Naive thymus-derived CD4-positive, alpha-beta T cell (primary cell): ENCODE measurements at regions of chr9 and their contacts with region 1.

Region 1: DNA sequence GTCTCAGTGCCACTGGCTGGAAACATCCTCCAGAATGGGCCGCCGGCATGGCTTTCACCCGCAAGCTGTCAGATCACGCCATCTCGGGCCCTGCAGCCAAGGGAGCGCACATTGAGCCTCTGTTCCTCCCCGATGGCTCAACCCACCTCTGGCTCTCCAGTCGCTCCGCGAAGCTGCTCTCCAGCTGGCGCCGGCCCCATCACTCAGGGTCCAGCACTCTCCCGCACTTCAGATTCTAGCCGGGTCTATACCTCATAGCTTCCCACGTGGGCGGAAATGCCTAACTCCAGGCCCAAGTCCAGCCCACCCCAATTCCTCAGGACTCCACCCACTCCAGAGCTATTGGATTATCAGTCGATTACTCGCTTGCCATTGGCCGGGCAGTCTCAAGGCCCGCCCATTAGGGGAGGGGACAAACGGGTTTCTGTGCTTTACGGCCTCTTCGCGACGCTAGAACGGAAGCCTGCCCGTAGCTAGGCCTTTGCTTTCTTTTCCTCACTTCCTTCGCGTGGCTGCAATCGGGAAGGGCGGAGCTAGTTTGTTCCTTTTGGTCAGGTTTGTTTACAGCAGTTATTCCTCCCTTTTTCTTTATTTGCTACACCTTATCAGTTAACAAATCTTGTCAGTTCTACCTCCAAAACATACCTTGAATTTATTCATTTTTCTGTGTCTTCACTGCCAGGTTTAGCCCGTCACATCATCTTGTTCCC is at the start of gene NOL6:
- DNase-seq: peak; percentile 91 to 99 (median 98)
- ATAC-seq: peak; percentile 100
- H3K4me3 ChIP-seq: peak within 1 kb of the TSS; percentile 88
- H3K4me3 Mint-ChIP-seq: peak within 1 kb of the TSS; percentile 88 to 100 (median 97)
- H3K27ac ChIP-seq: peak within 1 kb of the TSS; percentile 78
- H3K27ac Mint-ChIP-seq: peak within 1 kb of the TSS; percentile 88 to 99 (median 96)
- H3K4me1 ChIP-seq: peaks cover 13 to 19% of the 10 kb centered on the region in 2 donors
- H3K4me1 Mint-ChIP-seq: peaks cover 9 to 38% (median 31%) of the 10 kb centered on the region in 7 donors
- H3K27me3 ChIP-seq: no peaks in the 10 kb centered on the region
- H3K27me3 Mint-ChIP-seq: no peaks in the 10 kb centered on the region
- total RNA-seq, gene NOL6: 34.0 to 48.0 (median 44.0) TPM

Region 2: GRCh38 chr9:32117276-32117675 is 1356.5 kb before region 1 on chr9:
- CTCF ChIA-PET with region 1: no interaction called
- POLR2A ChIA-PET with region 1: no interaction called
- intact Hi-C with region 1: no loop called
- DNase-seq: no peak
- ATAC-seq: no peak
- H3K4me3 ChIP-seq: no peak overlapping the region
- H3K4me3 Mint-ChIP-seq: no peak overlapping the region
- H3K27ac ChIP-seq: no peak overlapping the region
- H3K27ac Mint-ChIP-seq: no peak overlapping the region
- H3K4me1 ChIP-seq: no peaks in the 10 kb centered on the region
- H3K4me1 Mint-ChIP-seq: no peaks in the 10 kb centered on the region
- H3K27me3 ChIP-seq: no peaks in the 10 kb centered on the region
- H3K27me3 Mint-ChIP-seq: peaks cover 0 to 6% (median 0%) of the 10 kb centered on the region in 5 donors

Region 3: DNA sequence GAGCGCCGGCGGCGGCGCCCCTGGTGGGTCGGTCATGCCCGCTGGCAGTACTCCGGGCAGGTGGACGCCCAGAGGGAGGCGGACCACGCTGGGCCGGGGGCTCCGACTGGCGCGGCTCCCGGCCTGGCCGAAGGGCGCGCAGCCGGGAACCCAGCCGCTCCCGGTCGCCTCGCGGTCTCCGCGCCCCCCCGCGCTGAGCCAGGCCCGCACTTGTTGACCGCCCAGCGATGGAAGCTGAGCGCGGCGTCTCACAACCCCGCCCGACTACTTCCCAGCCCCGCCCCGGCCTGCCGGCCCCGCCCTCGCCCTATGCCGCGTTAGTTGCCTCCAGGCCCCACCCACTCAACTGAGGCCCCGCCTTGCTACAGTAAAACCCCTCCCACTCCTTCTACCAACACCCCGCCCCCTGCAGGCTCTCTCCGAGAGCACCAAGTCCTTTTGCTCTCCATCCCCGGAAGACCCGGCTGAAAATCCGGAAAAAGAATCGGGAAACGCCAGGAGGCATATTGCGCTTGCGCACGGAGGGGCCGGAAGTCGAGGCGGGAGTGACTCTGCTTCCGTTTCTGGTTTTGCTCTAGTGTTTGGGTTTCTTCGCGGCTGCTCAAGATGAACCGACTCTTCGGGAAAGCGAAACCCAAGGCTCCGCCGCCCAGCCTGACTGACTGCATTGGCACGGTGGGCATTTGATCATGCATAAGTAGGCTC is 209.2 kb before region 1 on chr9 and contains the starts of genes BAG1 and CHMP5:
- CTCF ChIA-PET with region 1: interaction called, 3 read pairs
- POLR2A ChIA-PET with region 1: no interaction called
- intact Hi-C with region 1: loop called (anchors 1 to 10 kb)
- DNase-seq: peak; percentile 98 to 100 (median 100)
- ATAC-seq: peak; percentile 99
- H3K4me3 ChIP-seq: peak within 1 kb of the TSS; percentile 95
- H3K4me3 Mint-ChIP-seq: peak within 1 kb of the TSS; percentile 82 to 98 (median 92)
- H3K27ac ChIP-seq: peak within 1 kb of the TSS; percentile 88
- H3K27ac Mint-ChIP-seq: peak within 1 kb of the TSS; percentile 84 to 99 (median 97)
- H3K4me1 ChIP-seq: peaks cover 15 to 34% of the 10 kb centered on the region in 2 donors
- H3K4me1 Mint-ChIP-seq: peaks cover 36 to 66% (median 55%) of the 10 kb centered on the region in 7 donors
- H3K27me3 ChIP-seq: no peaks in the 10 kb centered on the region
- H3K27me3 Mint-ChIP-seq: peaks cover 0 to 2% (median 0%) of the 10 kb centered on the region in 5 donors
- total RNA-seq, gene BAG1: 48.6 to 77.2 (median 61.0) TPM
- total RNA-seq, gene CHMP5: 21.4 to 74.6 (median 35.3) TPM

Region 4: DNA sequence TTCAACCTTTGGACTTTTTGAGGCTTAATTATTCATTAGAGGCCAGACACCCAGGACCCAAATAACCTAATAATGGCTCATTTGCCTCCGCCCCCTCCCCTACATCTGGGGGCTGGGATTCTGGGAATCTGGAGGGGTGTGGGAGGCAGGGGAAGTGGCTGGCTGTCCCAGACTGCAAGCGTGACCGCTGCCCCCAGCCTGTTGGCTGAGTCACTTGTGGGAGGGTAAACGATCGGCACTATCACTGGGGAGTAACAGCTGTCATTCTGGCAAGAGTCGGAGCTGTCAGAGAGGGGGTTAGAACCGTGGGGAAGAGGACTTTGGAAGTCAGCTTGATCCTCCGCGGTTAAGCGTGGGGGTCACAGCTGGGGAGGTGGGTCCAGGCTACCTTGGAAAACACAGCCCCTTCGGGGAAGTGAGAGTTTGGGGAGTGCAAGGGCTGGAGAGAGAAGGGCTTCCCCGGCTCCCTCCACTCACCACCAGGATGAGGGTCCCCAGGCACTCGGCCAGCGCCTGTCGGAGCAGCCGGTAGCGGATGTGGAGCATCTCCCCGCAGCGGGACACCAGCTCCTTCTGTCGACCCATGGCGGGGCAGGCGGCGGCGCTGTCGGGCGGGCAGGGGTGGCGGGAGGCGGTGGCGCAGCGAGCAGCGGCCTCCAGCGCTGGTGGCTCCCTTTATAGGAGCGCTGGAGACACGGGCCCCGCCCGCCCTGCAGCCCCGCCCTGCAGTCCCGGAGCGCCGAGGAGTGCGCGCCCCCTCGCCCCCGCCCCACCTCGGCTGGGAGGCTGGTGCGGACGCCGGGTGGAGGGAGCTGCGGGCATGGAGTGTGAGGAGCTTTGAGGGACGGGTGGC is 26.6 kb before region 1 on chr9 and contains the start of gene AQP3:
- CTCF ChIA-PET with region 1: interaction called, 17 read pairs
- POLR2A ChIA-PET with region 1: interaction called, 31 read pairs
- intact Hi-C with region 1: loop called (anchors 1 kb)
- DNase-seq: peak; percentile 59 to 77 (median 72)
- ATAC-seq: peak; percentile 79
- H3K4me3 ChIP-seq: peak within 1 kb of the TSS; percentile 86
- H3K4me3 Mint-ChIP-seq: peak within 1 kb of the TSS; percentile 89 to 98 (median 94)
- H3K27ac ChIP-seq: peak within 1 kb of the TSS; percentile 85
- H3K27ac Mint-ChIP-seq: peak within 1 kb of the TSS; percentile 81 to 97 (median 96)
- H3K4me1 ChIP-seq: peaks cover 27 to 36% of the 10 kb centered on the region in 2 donors
- H3K4me1 Mint-ChIP-seq: peaks cover 23 to 60% (median 45%) of the 10 kb centered on the region in 7 donors
- H3K27me3 ChIP-seq: no peaks in the 10 kb centered on the region
- H3K27me3 Mint-ChIP-seq: no peaks in the 10 kb centered on the region
- total RNA-seq, gene AQP3: 53.3 to 173 (median 110) TPM

Region 5: GRCh38 chr9:33452828-33453271 is 20.9 kb before region 1 on chr9:
- CTCF ChIA-PET with region 1: interaction called, 17 read pairs
- POLR2A ChIA-PET with region 1: interaction called, 31 read pairs
- intact Hi-C with region 1: no loop called
- DNase-seq: peak in 4 of 9 donors; percentile 25 to 51 (median 40)
- ATAC-seq: peak; percentile 63
- H3K4me3 ChIP-seq: no peak overlapping the region
- H3K4me3 Mint-ChIP-seq: peak overlapping the region in 5 of 10 donors; percentile 25 to 67 (median 36)
- H3K27ac ChIP-seq: peak overlapping the region; percentile 37
- H3K27ac Mint-ChIP-seq: peak overlapping the region in 8 of 9 donors; percentile 59 to 95 (median 82)
- H3K4me1 ChIP-seq: peaks cover 39 to 56% of the 10 kb centered on the region in 2 donors
- H3K4me1 Mint-ChIP-seq: peaks cover 40 to 64% (median 56%) of the 10 kb centered on the region in 7 donors
- H3K27me3 ChIP-seq: no peaks in the 10 kb centered on the region
- H3K27me3 Mint-ChIP-seq: no peaks in the 10 kb centered on the region

Region 6: GRCh38 chr9:33458444-33458843 is 15.4 kb before region 1 on chr9:
- CTCF ChIA-PET with region 1: interaction called, 7 read pairs
- POLR2A ChIA-PET with region 1: interaction called, 13 read pairs
- intact Hi-C with region 1: no loop called
- DNase-seq: peak in 5 of 9 donors; percentile 22 to 68 (median 35)
- ATAC-seq: peak; percentile 65
- H3K4me3 ChIP-seq: no peak overlapping the region
- H3K4me3 Mint-ChIP-seq: peak overlapping the region; percentile 1 to 78 (median 60)
- H3K27ac ChIP-seq: peak overlapping the region; percentile 60
- H3K27ac Mint-ChIP-seq: peak overlapping the region; percentile 80 to 95 (median 89)
- H3K4me1 ChIP-seq: peaks cover 34 to 49% of the 10 kb centered on the region in 2 donors
- H3K4me1 Mint-ChIP-seq: peaks cover 34 to 53% (median 47%) of the 10 kb centered on the region in 7 donors
- H3K27me3 ChIP-seq: no peaks in the 10 kb centered on the region
- H3K27me3 Mint-ChIP-seq: no peaks in the 10 kb centered on the region

Region 7: DNA sequence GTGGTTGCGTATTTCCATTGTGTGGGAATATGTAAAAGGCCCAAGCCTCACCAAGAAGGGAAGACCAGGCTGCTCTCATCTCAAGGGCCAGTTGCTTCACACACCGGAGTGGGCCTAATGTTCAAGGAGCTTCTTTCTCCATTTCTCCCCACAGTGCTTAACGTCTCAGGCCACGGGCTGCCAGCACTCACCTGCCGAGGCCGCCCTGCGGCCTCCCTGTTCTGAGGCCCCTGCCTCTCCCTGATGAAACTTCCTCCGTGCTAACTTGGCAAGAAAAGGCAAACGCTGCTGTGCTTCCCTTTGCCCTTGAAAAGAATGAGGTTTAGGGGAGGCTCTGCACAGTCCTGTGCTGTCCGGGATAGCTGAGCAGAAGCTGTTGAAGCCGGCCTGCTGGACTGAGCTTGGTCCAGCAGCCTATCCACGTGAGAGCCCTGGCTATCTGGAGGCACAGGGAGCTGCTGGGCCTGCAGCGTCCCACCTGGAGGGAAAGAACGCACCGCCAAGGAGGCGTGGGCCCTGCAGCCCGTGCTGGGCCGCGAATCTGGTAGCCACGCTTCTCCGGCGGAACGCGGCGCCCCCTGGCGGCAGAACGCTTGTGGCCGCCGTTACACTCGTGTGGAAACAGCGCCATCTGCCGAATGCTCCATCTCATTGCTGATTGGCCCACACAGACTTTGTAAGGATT is 248.0 kb after region 1 on chr9:
- CTCF ChIA-PET with region 1: no interaction called
- POLR2A ChIA-PET with region 1: no interaction called
- intact Hi-C with region 1: no loop called
- DNase-seq: peak; percentile 68 to 90 (median 86)
- ATAC-seq: peak; percentile 93
- H3K4me3 ChIP-seq: no peak overlapping the region
- H3K4me3 Mint-ChIP-seq: peak overlapping the region in 1 of 10 donors; percentile 32
- H3K27ac ChIP-seq: no peak overlapping the region
- H3K27ac Mint-ChIP-seq: peak overlapping the region in 3 of 9 donors; percentile 22 to 55 (median 49)
- H3K4me1 ChIP-seq: no peaks in the 10 kb centered on the region
- H3K4me1 Mint-ChIP-seq: peaks cover 0 to 4% (median 0%) of the 10 kb centered on the region in 7 donors
- H3K27me3 ChIP-seq: no peaks in the 10 kb centered on the region
- H3K27me3 Mint-ChIP-seq: peaks cover 5 to 27% (median 13%) of the 10 kb centered on the region in 5 donors

Region 8: DNA sequence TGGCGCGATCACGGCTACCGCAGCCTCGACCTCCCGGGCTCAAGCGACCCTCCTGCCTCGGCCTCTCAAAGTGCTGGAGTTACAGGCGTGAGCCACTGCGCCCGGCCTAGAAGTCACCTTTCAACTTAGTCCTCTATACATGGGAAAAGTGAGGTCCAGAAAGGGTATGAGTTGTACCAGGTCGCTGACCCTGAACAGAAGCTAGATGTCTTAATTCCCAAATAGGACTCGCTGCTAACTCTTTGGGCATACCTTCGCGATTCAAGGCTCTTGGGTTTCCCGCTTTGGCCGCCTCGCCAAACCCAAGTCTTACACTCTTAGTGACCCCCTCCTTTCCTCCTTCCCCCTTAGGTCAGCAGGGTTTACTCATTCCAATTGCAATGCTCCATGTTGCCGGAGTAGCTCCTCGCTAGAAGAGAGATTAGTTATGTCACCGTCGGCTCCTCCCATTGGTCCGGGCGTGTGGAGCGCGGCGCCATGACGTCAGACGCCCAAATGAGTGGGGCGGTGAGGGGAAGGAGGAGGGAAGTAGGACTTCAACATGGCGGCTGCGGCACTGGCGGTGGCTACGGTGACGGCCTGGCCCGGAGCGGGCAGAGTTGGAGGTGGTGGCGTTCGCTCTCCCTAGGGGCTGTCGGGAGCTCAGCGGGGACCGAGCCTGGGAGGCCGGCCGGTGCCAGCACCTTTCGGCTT is 704.9 kb after region 1 on chr9 and contains the start of gene UBAP1:
- CTCF ChIA-PET with region 1: interaction called, 3 read pairs
- POLR2A ChIA-PET with region 1: no interaction called
- intact Hi-C with region 1: loop called in 1 of 2 experiments (anchors 2 kb)
- DNase-seq: peak; percentile 83 to 97 (median 93)
- ATAC-seq: peak; percentile 99
- H3K4me3 ChIP-seq: peak within 1 kb of the TSS; percentile 93
- H3K4me3 Mint-ChIP-seq: peak within 1 kb of the TSS; percentile 93 to 100 (median 96)
- H3K27ac ChIP-seq: peak within 1 kb of the TSS; percentile 97
- H3K27ac Mint-ChIP-seq: peak within 1 kb of the TSS; percentile 94 to 99 (median 98)
- H3K4me1 ChIP-seq: peaks cover 0 to 8% of the 10 kb centered on the region in 2 donors
- H3K4me1 Mint-ChIP-seq: peaks cover 7 to 33% (median 21%) of the 10 kb centered on the region in 7 donors
- H3K27me3 ChIP-seq: no peaks in the 10 kb centered on the region
- H3K27me3 Mint-ChIP-seq: no peaks in the 10 kb centered on the region
- total RNA-seq, gene UBAP1: 31.1 to 39.9 (median 32.8) TPM

Region 9: DNA sequence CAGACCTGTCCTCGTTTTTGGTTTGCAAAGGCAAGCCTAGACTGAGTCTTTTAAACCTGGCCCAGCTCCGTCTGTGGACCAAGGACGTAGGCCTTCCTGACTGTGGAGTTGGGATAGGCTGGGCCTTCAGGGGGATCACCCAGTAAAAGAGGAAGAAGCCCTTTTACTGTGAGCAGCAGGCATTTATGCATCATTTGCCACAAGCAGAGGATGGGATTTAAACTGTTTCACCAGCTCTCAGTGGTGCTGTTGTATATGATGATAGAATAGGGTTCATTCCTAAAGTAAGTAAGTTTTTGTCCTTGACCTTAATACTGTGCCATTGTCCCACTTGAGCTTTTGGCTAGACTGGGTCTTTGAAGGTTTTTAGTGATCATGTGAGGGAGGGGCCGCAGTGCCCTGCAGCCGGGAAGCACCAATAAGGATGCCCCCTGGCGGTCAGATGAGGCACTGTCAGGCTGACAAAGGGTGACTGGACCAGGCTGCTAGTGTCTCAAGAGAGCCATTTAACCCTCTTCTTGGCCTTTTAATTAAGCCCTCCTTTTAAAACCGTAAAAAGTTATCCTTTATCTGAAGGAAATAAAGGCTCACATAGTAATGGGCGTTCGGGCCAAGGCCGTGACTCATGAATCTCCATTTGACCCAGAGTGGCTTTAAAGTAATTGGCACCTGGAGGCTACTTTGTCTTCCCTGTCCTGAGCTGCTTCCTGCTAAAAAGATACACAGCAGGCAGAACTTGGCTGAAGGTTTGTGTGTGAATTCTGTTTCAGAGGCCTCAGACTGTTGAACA is 779.1 kb after region 1 on chr9:
- CTCF ChIA-PET with region 1: no interaction called
- POLR2A ChIA-PET with region 1: no interaction called
- intact Hi-C with region 1: no loop called
- DNase-seq: peak; percentile 38 to 70 (median 56)
- ATAC-seq: peak; percentile 85
- H3K4me3 ChIP-seq: no peak overlapping the region
- H3K4me3 Mint-ChIP-seq: no peak overlapping the region
- H3K27ac ChIP-seq: no peak overlapping the region
- H3K27ac Mint-ChIP-seq: peak overlapping the region in 7 of 9 donors; percentile 15 to 69 (median 46)
- H3K4me1 ChIP-seq: peaks cover 0 to 6% of the 10 kb centered on the region in 2 donors
- H3K4me1 Mint-ChIP-seq: peaks cover 9 to 21% (median 17%) of the 10 kb centered on the region in 7 donors
- H3K27me3 ChIP-seq: no peaks in the 10 kb centered on the region
- H3K27me3 Mint-ChIP-seq: no peaks in the 10 kb centered on the region